Activated CD4-positive, alpha-beta T cell treated with anti-CD3 and anti-CD28 coated beads for 36 hours (primary cell): ENCODE measurements at regions of chr15 and their contacts with region 1.

Region 1: DNA sequence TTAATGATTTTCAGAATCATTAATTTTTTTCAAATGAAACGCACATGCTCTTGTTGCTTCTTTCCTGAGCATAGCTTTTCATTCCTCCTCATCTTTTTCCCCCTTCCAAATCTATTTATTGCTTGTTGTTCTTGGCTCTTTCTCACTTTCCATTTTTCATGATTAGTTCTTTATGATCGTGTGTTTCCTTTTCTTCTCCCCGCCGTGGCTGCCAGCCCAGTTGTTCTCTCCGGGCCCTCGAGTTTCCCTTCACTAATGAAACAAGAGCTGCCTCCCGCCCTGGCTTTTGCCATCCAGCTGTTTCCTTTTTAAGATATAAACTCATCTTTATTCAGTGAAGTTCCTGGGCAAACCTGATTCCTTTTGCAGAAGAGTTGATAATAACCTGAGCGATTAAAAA is 170.2 kb upstream of the NR2F2 start:
- DNase-seq: no peak
- ATAC-seq: no peak
- H3K4me3 Mint-ChIP-seq: no peak overlapping the region
- H3K27ac Mint-ChIP-seq: no peak overlapping the region
- H3K4me1 Mint-ChIP-seq: no peaks in the 10 kb centered on the region
- H3K27me3 Mint-ChIP-seq: peaks cover 4% of the 10 kb centered on the region

Region 2: GRCh38 chr15:95653361-95653805 is 506.9 kb before region 1 on chr15:
- CTCF ChIA-PET with region 1: no interaction called
- POLR2A ChIA-PET with region 1: interaction called, 11 read pairs
- intact Hi-C with region 1: no loop called
- DNase-seq: no peak
- ATAC-seq: no peak
- H3K4me3 Mint-ChIP-seq: no peak overlapping the region
- H3K27ac Mint-ChIP-seq: no peak overlapping the region
- H3K4me1 Mint-ChIP-seq: no peaks in the 10 kb centered on the region
- H3K27me3 Mint-ChIP-seq: peaks cover 5% of the 10 kb centered on the region

Region 3: DNA sequence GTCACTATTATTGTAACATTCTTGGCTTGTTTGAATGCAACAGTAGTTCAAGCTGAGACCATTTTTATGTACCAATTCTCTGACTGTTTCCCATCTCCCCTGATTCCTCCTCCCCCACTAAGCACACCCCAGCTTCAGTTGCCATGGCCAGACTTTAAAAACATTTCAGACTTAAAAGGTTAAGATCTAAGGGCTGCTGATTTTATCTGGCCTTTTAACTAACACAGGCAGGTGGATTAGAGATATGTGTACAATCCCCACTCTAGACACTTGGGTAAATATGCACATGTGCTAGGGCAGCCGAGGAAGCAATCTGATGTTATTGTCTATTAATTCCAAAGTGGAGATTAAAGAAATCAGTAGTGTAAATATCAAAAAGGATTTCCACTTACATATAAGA is 216.0 kb before region 1 on chr15:
- CTCF ChIA-PET with region 1: no interaction called
- POLR2A ChIA-PET with region 1: no interaction called
- intact Hi-C with region 1: no loop called
- DNase-seq: no peak
- ATAC-seq: no peak
- H3K4me3 Mint-ChIP-seq: no peak overlapping the region
- H3K27ac Mint-ChIP-seq: no peak overlapping the region
- H3K4me1 Mint-ChIP-seq: no peaks in the 10 kb centered on the region
- H3K27me3 Mint-ChIP-seq: peaks cover 3% of the 10 kb centered on the region

Region 4: DNA sequence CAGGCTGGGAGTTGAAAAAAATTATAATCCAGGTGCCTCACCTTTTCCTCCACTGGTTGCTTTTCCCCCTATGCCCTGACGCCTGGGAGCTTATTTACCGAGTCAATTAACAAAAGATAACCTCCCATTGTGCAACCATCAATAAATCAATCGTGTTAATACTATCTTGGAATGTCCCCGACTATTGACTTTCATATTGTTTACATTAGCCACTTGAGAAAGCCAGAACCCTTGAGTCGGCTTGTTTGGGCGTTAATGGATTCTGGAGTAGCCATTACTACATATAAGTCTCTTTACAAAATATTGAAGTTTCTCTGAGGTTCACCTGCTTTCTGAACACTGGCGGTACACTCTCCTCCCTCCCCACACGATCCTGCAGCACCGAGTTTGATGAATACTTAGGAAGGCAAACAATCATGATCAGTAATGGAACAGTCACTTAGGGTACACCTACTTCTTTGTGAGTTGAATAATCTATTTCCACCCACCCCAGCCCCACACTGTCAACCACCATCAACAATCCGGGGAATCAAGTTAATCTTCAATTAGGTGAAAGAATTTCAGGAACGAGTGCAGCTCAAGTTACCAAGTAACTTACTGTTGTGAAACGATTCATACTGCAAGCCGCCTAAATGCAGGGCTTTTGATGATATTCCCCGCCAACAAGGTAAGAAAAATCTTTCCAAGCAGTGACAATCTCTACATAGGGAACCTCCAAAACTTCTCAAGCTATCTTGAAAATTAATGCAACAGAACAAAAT is 10.9 kb after region 1 on chr15:
- CTCF ChIA-PET with region 1: no interaction called
- POLR2A ChIA-PET with region 1: no interaction called
- intact Hi-C with region 1: no loop called
- DNase-seq: no peak
- ATAC-seq: no peak
- H3K4me3 Mint-ChIP-seq: no peak overlapping the region
- H3K27ac Mint-ChIP-seq: no peak overlapping the region
- H3K4me1 Mint-ChIP-seq: no peaks in the 10 kb centered on the region
- H3K27me3 Mint-ChIP-seq: peaks cover 6% of the 10 kb centered on the region